Transverse colon (tissue), 4 donors: ENCODE measurements at regions of chr4 and their contacts with region 1.

Region 1: GRCh38 chr4:16026160-16026761 is 57.6 kb downstream of the PROM1 start:
- DNase-seq: no peak
- H3K4me3 ChIP-seq: no peak overlapping the region
- H3K27ac ChIP-seq: no peak overlapping the region
- H3K4me1 ChIP-seq: no peaks in the 10 kb centered on the region
- H3K27me3 ChIP-seq: no peaks in the 10 kb centered on the region
- CTCF ChIP-seq: peak; percentile 76 to 87 (median 82)
- EP300 ChIP-seq: no peak
- POLR2A ChIP-seq: no peak

Region 2: DNA sequence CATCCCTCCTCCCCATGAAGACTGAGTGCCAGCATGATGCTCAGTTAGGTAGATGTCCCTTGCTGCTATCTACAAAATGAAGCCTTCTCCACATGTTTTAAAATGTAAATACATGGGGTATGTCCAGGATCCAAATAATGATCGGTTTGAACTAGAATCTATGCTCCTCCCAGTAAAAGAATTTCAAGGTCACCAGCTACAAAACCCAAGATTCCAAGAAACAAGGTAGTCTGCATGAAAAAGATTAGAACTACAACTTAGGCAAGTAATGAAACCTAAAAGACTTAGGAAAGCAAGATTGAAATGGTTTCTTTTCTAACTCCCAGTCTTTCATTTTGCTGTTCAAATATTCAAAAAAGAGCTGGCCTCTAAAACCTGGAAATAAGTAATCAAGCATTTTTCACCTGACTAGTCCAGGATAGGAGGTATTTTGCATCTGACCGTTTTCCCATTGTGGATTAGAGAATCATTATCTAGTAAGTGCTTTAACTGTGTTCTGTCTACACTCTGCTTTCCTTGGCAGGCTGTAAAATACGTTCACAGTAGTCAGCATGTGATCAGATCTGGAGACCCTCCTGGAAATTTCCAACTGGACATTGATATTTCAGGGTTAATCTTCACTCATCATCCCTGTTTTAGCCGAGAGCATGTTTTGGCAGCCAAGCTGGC is 499.2 kb before region 1 on chr4:
- in situ Hi-C with region 1: no loop called
- intact Hi-C with region 1: no loop called
- DNase-seq: no peak
- H3K4me3 ChIP-seq: no peak overlapping the region
- H3K27ac ChIP-seq: no peak overlapping the region
- H3K4me1 ChIP-seq: no peaks in the 10 kb centered on the region
- H3K27me3 ChIP-seq: no peaks in the 10 kb centered on the region
- CTCF ChIP-seq: no peak
- EP300 ChIP-seq: no peak
- POLR2A ChIP-seq: no peak

Region 3: GRCh38 chr4:16116493-16116990 is 90.3 kb after region 1 on chr4:
- in situ Hi-C with region 1: no loop called
- intact Hi-C with region 1: no loop called
- DNase-seq: no peak
- H3K4me3 ChIP-seq: no peak overlapping the region
- H3K27ac ChIP-seq: no peak overlapping the region
- H3K4me1 ChIP-seq: no peaks in the 10 kb centered on the region
- H3K27me3 ChIP-seq: no peaks in the 10 kb centered on the region
- CTCF ChIP-seq: no peak
- EP300 ChIP-seq: no peak
- POLR2A ChIP-seq: no peak

Region 4: GRCh38 chr4:16196478-16197393 is 170.5 kb after region 1 on chr4:
- in situ Hi-C with region 1: loop called in 1 of 4 experiments (anchors 25 kb)
- intact Hi-C with region 1: loop called (anchors 5 kb)
- DNase-seq: no peak
- H3K4me3 ChIP-seq: peak overlapping the region in 1 of 4 donors; percentile 34
- H3K27ac ChIP-seq: peak overlapping the region; percentile 52 to 79 (median 69)
- H3K4me1 ChIP-seq: peaks cover 2 to 47% (median 16%) of the 10 kb centered on the region in 4 donors
- H3K27me3 ChIP-seq: no peaks in the 10 kb centered on the region
- CTCF ChIP-seq: peak; percentile 38 to 73 (median 45)
- EP300 ChIP-seq: no peak
- POLR2A ChIP-seq: no peak

Region 5: DNA sequence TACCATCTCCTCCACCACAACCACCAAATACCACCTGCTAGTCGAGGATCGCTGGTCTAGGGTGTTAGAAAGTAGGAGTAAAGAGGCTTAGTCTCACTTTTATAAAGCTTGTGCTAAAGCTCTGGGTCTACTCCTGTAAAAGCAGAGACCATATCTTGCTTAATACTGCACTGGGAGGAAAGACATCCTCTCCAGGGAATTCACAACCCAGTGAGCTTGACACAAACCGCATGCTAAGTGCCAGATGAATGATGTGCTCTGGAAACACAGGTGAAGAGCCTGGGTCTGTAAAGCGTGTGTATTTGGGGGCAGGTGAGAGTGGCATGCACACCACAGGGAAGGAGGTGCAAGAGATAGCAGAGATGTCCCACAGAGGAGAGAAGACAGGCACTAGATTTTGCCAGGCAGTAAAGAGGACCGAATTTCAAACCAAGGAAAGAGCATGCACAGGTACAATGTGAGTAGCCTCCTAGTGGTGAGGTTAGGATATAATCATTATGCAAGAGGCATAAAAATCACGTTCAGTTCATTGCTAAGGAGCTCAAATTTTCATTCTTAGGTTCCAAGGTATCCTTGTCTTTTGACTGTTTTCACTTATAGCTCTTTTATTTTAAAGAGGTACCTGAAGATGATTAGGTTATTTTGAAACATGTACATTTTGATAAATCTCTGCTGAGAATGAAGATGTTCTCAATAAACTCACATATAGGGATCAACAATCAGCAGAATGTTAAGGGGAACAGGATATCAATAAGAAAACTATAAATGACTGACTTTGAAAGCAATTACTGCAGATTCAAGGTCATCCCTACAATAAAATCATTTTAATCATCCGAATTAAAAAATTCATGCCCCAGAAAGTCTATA is 179.3 kb after region 1 on chr4:
- in situ Hi-C with region 1: loop called in 1 of 4 experiments (anchors 25 kb)
- intact Hi-C with region 1: no loop called
- DNase-seq: no peak
- H3K4me3 ChIP-seq: no peak overlapping the region
- H3K27ac ChIP-seq: no peak overlapping the region
- H3K4me1 ChIP-seq: peaks cover 0 to 13% (median 0%) of the 10 kb centered on the region in 4 donors
- H3K27me3 ChIP-seq: no peaks in the 10 kb centered on the region
- CTCF ChIP-seq: peak; percentile 55 to 71 (median 63)
- EP300 ChIP-seq: no peak
- POLR2A ChIP-seq: no peak

Region 6: DNA sequence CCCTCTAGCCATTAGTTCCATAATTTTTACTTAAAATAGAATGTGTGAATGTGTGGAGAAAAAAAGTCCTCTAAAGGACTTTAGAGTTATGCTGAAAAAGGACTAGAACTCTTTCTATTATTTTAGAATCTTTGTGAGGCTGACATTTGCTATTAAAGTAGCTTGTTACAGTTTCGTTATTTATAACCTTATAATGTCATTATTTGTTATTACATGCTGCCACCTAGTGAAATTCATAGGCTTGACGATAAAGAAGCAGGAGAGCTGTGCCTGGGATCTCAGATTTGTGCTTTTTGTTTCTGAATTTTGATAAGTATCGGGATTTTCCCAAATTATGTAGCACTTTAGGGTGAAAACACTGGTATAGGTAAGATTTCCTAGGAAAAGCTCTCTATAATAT is 238.5 kb after region 1 on chr4:
- in situ Hi-C with region 1: loop called in 3 of 4 experiments (anchors 10 kb)
- intact Hi-C with region 1: no loop called
- DNase-seq: no peak
- H3K4me3 ChIP-seq: no peak overlapping the region
- H3K27ac ChIP-seq: no peak overlapping the region
- H3K4me1 ChIP-seq: no peaks in the 10 kb centered on the region
- H3K27me3 ChIP-seq: no peaks in the 10 kb centered on the region
- CTCF ChIP-seq: peak; percentile 36 to 49 (median 46)
- EP300 ChIP-seq: no peak
- POLR2A ChIP-seq: no peak

Region 7: DNA sequence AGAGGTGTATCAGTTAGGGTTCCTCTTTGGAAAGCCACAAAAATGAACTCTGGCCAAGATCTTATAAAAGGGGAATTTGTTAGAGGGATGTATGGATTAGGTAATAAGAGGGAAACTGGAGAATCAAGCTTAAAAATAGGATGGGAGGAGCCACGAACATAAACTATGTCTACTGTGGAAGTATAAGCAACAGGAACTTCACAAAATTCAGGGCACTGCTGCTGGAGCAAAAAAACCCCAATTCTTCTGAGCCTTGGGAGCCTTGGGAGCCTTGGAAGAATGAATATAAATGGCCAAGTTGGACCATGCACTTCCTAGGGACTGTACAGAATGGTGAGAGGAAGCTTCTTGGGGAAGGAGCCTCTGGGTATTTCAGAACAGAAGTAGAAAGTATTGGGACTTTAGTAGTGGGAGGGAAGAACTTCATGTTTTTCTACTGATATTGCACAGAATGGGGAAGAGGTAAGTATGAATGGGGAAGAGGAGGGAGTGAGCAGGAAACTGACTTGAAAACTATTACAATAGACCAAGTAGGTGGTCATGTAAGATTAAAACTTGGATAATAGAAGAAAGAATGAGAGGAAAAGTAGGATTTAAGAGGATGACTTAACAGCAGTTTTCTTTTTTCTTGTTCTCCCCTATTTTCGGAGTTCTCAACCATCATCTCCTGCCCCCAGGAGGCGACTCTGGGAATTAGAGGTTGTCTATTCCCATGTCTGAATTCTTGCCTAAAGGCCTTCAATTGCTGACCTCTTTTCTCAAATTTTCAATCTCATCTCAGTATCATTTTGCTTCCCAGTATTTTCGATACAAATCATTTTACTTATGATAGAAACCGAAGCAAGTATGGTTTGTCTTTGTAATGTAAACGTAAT is 244.4 kb after region 1 on chr4:
- in situ Hi-C with region 1: loop called in 3 of 4 experiments (anchors 10 kb)
- intact Hi-C with region 1: loop called (anchors 5 kb)
- DNase-seq: no peak
- H3K4me3 ChIP-seq: no peak overlapping the region
- H3K27ac ChIP-seq: no peak overlapping the region
- H3K4me1 ChIP-seq: no peaks in the 10 kb centered on the region
- H3K27me3 ChIP-seq: no peaks in the 10 kb centered on the region
- CTCF ChIP-seq: peak in 1 of 5 experiments; percentile 8
- EP300 ChIP-seq: no peak
- POLR2A ChIP-seq: no peak

Region 8: GRCh38 chr4:16443504-16444088 is 417.3 kb after region 1 on chr4:
- in situ Hi-C with region 1: loop called in 1 of 4 experiments (anchors 25 kb)
- intact Hi-C with region 1: no loop called
- DNase-seq: no peak
- H3K4me3 ChIP-seq: no peak overlapping the region
- H3K27ac ChIP-seq: no peak overlapping the region
- H3K4me1 ChIP-seq: no peaks in the 10 kb centered on the region
- H3K27me3 ChIP-seq: no peaks in the 10 kb centered on the region
- CTCF ChIP-seq: peak; percentile 47 to 57 (median 49)
- EP300 ChIP-seq: no peak
- POLR2A ChIP-seq: no peak